ENCODE measurements at regions of chr11 and their contacts with region 1.

Region 1: GRCh38 chr11:124070915-124071635 is 29.9 kb upstream of the OR10G7 start:
- DNase-seq: peak; percentile 78
- ATAC-seq: peak; percentile 50; the same call in 1 of the 2 replicates
- H3K4me3 ChIP-seq: no peak overlapping the region
- H3K27ac ChIP-seq: no peak overlapping the region
- H3K4me1 ChIP-seq: no peaks in the 10 kb centered on the region
- H3K27me3 ChIP-seq: peaks cover 14% of the 10 kb centered on the region
- CTCF ChIP-seq: peak; percentile 75
- POLR2A ChIP-seq: no peak
- RAD21 ChIP-seq: peak; percentile 71

Region 2: GRCh38 chr11:124194698-124195410 is 123.8 kb after region 1 on chr11:
- CTCF ChIA-PET with region 1: interaction called, 4 read pairs
- POLR2A ChIA-PET with region 1: no interaction called
- dilution Hi-C with region 1: no loop called
- in situ Hi-C with region 1: loop called (anchors 5 kb)
- intact Hi-C with region 1: loop called (anchors 1 kb)
- DNase-seq: peak; percentile 58
- ATAC-seq: peak; percentile 70
- H3K4me3 ChIP-seq: no peak overlapping the region
- H3K27ac ChIP-seq: no peak overlapping the region
- H3K4me1 ChIP-seq: no peaks in the 10 kb centered on the region
- H3K27me3 ChIP-seq: peaks cover 3% of the 10 kb centered on the region
- CTCF ChIP-seq: peak; percentile 65
- POLR2A ChIP-seq: no peak
- RAD21 ChIP-seq: peak; percentile 68

Region 3: GRCh38 chr11:124329787-124330478 is 258.9 kb after region 1 on chr11:
- CTCF ChIA-PET with region 1: interaction called, 9 read pairs
- POLR2A ChIA-PET with region 1: no interaction called
- dilution Hi-C with region 1: no loop called
- in situ Hi-C with region 1: no loop called
- intact Hi-C with region 1: loop called (anchors 1 kb)
- DNase-seq: peak; percentile 2
- ATAC-seq: peak; percentile 35; the same call in 1 of the 2 replicates
- H3K4me3 ChIP-seq: no peak overlapping the region
- H3K27ac ChIP-seq: no peak overlapping the region
- H3K4me1 ChIP-seq: no peaks in the 10 kb centered on the region
- H3K27me3 ChIP-seq: peaks cover 3% of the 10 kb centered on the region; the same call in 1 of the 2 replicates
- CTCF ChIP-seq: peak; percentile 30; the same call in 1 of the 2 replicates
- POLR2A ChIP-seq: no peak
- RAD21 ChIP-seq: peak; percentile 31

Region 4: GRCh38 chr11:124586238-124586860 is 515.3 kb after region 1 on chr11:
- CTCF ChIA-PET with region 1: interaction called, 6 read pairs
- POLR2A ChIA-PET with region 1: no interaction called
- dilution Hi-C with region 1: no loop called
- in situ Hi-C with region 1: loop called (anchors 25 kb)
- intact Hi-C with region 1: loop called (anchors 1 kb)
- DNase-seq: peak; percentile 66
- ATAC-seq: no peak; the same call in 1 of the 2 replicates
- H3K4me3 ChIP-seq: no peak overlapping the region
- H3K27ac ChIP-seq: no peak overlapping the region
- H3K4me1 ChIP-seq: no peaks in the 10 kb centered on the region
- H3K27me3 ChIP-seq: peaks cover 25% of the 10 kb centered on the region
- CTCF ChIP-seq: peak; percentile 76
- POLR2A ChIP-seq: no peak
- RAD21 ChIP-seq: peak; percentile 60